SK-MEL-5 (cell line): ENCODE measurements at regions of chr14 and their contacts with region 1.

Region 1: DNA sequence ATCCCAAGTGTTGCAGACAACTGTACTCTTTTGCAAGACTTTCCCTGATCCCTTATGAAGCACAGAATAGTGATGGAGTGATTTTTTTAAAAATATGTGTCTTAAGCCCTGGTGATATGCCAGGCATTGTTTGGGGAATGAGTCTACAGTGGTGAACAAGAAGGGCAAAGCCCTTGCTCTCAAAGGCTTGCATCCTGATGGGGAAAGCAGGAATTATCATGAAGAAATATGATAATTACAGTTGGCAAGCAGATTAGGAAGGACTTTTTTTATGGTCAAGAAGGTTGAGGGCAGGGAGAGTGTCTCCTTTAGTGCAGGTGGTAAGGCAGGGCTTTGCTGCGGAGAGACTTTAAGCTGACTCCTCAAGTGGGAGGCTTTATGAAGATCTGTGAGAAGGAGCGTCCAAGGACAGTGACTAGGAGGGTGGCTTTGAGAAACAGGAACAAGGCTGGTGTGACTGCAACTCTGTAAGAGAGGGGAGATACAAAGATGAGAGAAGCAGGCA is 100.2 kb downstream of the SYNE2 start:
- DNase-seq: no peak

Region 2: DNA sequence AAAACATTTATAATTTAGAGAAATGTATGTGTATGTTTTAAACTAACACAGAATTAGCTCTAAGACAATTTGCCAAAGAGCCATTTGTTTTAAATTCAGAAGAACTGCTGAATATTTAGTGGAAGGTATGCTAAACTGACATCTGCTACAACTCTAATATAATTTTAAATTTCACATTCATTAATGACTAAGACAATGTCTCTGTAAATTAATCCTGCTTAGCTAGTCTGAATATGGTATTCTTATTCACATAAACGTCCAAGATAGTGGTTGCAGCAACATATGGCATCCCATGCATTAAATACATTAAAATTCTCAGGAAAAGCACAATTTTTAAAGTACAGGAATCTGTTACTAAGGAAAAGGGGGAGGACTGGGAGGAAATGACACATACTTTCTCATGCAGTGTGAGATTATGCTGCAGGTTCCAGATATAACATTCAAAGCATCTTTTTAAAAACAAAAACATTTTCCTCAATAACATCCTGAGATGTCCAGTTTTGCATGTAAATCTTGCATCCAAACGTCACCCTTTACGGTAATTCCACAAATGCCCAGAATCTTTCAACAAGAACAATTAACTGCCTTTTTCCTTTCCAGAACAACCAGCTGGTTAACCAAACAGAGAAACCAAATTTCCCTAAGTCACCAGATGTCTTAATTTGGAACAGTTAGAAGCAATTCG is 338.2 kb before region 1 on chr14:
- in situ Hi-C with region 1: no loop called
- DNase-seq: no peak

Region 3: DNA sequence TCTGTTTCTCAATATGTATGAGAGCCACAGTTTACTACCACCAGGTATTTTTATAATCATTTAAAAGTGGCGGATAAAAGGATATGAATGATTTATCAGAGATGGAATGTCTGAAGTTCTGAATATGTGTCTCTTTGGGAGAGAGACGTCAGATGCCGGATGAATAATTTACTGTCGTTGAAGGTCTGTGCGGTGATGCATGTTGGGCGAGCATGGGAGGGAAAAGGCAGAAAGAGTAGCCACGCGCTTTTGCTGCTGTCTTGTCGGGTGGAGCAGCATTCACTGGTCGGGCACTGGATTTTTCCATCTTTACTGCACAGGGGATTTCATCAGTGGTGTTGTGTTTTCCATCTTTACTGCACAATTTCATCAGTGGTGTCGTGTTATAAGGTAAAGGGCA is 34.6 kb before region 1 on chr14:
- in situ Hi-C with region 1: loop called (anchors 5 kb)
- DNase-seq: no peak

Region 4: DNA sequence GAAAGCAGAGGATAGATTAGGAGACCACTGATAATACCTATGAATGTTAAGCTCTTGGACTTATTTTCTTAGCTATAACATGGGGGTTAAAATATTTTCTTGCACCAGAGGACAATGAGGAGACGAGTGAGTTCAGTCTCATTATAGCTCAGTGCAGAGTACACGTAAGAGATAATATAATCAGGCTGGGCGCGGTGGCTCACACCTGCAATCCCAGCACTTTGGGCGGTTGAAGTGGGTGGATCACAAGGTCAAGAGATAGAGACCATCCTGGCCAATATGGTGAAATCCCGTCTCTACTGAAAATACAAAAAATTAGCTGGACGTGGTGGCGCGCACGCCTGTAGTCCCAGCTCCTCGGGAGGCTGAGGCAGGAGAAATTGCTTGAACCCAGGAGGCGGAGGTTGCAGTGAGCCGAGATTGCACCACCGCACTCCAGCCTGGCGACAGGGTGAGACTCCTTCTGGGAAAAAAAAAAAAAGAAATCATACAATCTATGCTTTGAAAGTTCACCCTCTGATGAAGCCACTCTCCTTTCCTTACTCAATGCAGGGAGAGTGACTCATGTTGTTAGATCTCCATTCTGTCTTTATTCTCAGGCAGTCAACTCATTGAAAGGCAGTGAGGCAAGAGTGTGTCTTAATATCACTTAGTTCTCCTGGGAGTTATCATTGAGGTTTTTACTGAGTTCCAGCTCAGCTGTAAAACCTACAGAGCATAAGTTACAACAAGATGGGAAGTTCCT is 34.0 kb after region 1 on chr14:
- in situ Hi-C with region 1: no loop called
- DNase-seq: peak; percentile 88

Region 5: GRCh38 chr14:64349741-64350490 is 396.9 kb after region 1 on chr14:
- in situ Hi-C with region 1: no loop called
- DNase-seq: no peak